A549 (cell line): ENCODE measurements at regions of chr1 and their contacts with region 1.

Region 1: DNA sequence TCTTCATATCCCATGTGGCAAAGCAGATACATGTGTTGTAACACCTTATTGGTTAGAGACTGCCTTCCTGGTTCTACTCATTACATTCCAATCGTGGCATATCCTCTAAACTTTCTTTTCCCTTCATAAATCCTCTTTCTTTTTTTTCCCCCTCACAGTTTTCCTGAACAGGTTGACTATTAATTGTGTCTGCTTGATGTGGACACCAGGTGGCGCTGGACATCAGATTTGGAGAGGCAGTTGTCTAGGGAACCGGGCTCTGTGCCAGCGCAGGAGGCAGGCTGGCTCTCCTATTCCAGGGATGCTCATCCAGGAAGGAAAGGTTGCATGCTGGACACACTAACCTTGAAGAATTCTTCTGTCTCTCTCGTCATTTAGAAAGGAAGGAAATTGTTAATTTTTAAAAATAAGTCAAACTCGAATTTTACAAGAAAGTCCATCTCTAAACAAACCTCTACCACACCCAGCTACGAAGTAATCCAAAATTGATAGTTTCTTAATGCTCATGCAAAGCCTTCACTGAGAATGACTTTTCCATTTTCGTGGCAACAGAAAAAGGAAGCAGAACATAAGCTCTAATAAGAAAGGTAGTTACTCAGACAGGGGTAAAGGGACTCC is 59.4 kb upstream of the ASB17 start:
- DNase-seq: peak; percentile 38 to 77
- ATAC-seq: peak; percentile 82 to 87
- H3K4me3 ChIP-seq: no peak overlapping the region
- H3K27ac ChIP-seq: no peak overlapping the region
- H3K4me1 ChIP-seq: no peaks in the 10 kb centered on the region
- CTCF ChIP-seq: peak; percentile 68
- EP300 ChIP-seq: no peak
- POLR2A ChIP-seq: no peak
- RAD21 ChIP-seq: peak; percentile 66

Region 2: DNA sequence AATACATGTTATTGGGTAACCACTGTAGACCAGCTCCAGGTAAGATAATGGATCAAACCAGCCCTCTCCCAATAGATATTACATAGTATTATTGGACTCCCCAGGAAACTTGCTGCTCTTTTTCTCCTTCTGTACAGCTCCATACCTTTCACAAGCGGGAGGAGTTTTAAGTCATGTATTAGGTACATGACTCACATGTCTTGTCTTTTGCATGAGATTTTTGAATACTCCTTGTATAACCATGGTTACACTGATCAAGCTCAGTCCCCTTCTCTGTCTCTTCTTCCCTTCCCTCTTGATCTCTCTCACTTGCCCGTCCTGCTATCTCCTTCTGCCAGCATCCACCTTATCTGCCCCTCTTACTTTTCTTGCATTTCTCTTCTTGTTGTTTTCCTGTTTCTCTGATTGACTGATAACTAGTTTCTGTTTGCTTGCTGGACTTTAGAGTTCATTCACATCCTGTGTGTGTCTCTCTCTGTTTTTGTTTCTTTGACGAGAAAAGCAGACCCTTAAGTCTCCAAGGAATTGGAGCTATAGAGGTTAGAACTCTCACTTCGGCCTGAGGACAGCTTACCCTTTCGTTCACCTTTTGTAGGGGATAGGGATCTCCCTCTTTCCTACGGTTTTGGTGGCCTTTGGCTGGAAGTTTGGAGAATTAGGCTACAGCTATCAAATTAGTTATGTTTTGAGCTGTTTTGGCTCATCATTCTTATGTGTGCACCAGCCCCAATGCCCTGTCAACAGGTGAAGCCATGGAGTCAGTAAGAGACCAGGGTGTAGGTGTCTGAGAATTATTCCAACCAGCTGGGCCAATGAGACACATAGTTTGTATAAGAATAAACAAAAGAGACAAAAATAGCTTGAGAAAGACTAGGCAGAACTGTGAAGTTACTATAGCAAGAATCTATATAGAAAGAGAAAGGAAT is 10.4 kb before region 1 on chr1:
- CTCF ChIA-PET with region 1: interaction called, 11 read pairs
- POLR2A ChIA-PET with region 1: no interaction called
- DNase-seq: no peak
- ATAC-seq: no peak
- H3K4me3 ChIP-seq: no peak overlapping the region
- H3K27ac ChIP-seq: no peak overlapping the region
- H3K4me1 ChIP-seq: peaks cover 7% of the 10 kb centered on the region; the same call in 2 of the 3 replicates
- CTCF ChIP-seq: no peak
- EP300 ChIP-seq: no peak
- POLR2A ChIP-seq: no peak
- RAD21 ChIP-seq: no peak